ENCODE measurements at regions of chr3 and their contacts with region 1.

Region 1: GRCh38 chr3:184371570-184372018 is 6.4 kb downstream of the THPO start:
- DNase-seq: peak; percentile 79
- ATAC-seq: peak; percentile 97
- H3K4me3 Mint-ChIP-seq: no peak overlapping the region
- H3K27ac Mint-ChIP-seq: peak overlapping the region; percentile 51
- H3K4me1 Mint-ChIP-seq: peaks cover 11% of the 10 kb centered on the region
- H3K27me3 Mint-ChIP-seq: peaks cover 7% of the 10 kb centered on the region

Region 2: GRCh38 chr3:184135149-184135910 is 236.3 kb before region 1 on chr3 and contains the start of gene EIF2B5:
- CTCF ChIA-PET with region 1: no interaction called
- POLR2A ChIA-PET with region 1: no interaction called
- DNase-seq: peak; percentile 90
- ATAC-seq: peak; percentile 92
- H3K4me3 Mint-ChIP-seq: peak within 1 kb of the TSS; percentile 87
- H3K27ac Mint-ChIP-seq: peak within 1 kb of the TSS; percentile 88
- H3K4me1 Mint-ChIP-seq: peaks cover 30% of the 10 kb centered on the region
- H3K27me3 Mint-ChIP-seq: no peaks in the 10 kb centered on the region
- total RNA-seq, gene EIF2B5: 55.1 to 55.4 TPM

Region 3: GRCh38 chr3:184354121-184354728 is 17.4 kb before region 1 on chr3:
- CTCF ChIA-PET with region 1: interaction called, 22 read pairs
- POLR2A ChIA-PET with region 1: no interaction called
- DNase-seq: peak; percentile 63
- ATAC-seq: peak; percentile 73
- H3K4me3 Mint-ChIP-seq: no peak overlapping the region
- H3K27ac Mint-ChIP-seq: peak overlapping the region; percentile 63
- H3K4me1 Mint-ChIP-seq: peaks cover 6% of the 10 kb centered on the region
- H3K27me3 Mint-ChIP-seq: no peaks in the 10 kb centered on the region

Region 4: DNA sequence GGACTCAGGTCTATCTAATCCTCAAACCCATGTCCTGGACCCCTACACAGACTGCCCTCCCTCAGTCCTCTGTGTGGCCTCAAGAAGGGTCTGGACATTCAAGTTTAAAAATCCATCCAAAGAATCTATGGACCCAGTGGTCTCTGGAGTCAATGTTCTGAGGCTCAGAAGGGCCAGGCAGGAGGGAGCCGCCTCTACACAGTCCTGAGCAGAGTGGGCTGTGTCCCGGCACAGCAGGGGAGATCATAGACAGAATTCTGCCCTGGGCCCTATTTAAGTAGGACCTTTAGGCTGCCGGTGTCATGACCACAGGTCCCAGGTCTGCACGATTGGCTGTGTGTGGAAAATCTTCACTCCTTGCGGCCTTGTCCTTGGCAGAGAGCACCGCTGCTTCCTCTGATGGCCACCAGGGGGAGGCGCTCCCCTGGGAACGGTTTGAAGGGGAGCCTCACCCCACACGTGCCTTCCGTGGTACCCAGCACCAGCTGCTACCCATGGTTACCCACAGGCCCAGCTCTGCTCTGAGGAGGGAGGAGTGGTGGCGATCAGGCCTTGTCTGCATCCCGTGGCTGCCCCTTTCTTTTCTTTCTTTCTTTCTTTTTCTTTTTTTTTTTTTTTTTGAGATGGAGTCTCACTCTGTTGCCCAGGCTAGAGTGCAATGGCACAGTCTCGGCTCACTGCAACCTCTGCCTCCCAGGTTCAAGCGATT is 46.2 kb after region 1 on chr3:
- CTCF ChIA-PET with region 1: interaction called, 10 read pairs
- POLR2A ChIA-PET with region 1: no interaction called
- DNase-seq: peak; percentile 75
- ATAC-seq: peak; percentile 97
- H3K4me3 Mint-ChIP-seq: no peak overlapping the region
- H3K27ac Mint-ChIP-seq: no peak overlapping the region
- H3K4me1 Mint-ChIP-seq: no peaks in the 10 kb centered on the region
- H3K27me3 Mint-ChIP-seq: peaks cover 1% of the 10 kb centered on the region

Region 5: DNA sequence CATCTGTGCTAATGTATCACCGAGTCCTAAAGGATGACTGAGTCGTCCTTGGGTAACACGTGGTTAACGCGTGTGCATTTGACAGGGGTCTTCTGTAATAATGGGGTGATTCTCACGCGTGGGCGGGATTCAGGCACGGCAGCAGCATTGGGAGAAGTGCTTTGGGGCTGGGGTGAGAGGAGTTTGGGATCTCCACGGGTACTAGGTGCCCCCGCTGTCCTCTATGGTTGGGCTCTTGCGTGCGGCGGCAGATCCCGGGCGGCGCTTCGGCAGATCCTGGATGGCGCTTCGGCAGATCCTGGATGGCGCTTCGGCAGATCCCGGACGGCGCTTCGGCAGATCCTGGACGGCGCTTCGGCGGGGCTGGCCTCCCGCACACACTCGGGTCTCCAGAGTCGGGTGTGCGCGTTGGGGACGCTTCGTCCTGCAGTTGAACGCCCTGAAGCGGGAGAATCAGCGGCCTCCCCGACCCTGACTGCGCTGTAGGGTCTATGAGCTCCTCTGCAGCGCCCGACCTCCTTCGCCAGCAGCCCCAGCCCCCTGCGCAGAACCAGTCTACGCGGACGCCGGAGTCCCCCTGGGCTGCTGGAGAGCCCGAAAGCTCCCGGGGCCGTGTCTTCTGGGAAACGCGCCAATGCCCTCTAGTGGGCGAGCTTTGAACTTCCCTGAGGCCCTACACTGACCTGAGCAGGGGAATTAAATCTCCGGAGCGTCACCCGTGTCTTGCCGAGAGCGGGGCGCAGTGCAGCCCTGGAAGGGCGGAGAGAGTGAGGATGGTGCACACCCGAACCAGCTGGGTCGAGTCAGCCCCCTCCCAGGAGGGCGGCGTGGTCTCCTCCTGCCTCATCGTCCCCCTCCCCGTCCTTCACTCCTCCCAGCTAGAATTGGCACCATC is 141.9 kb after region 1 on chr3:
- CTCF ChIA-PET with region 1: interaction called, 69 read pairs
- POLR2A ChIA-PET with region 1: no interaction called
- DNase-seq: peak; percentile 87
- ATAC-seq: peak; percentile 99
- H3K4me3 Mint-ChIP-seq: peak overlapping the region; percentile 26
- H3K27ac Mint-ChIP-seq: no peak overlapping the region
- H3K4me1 Mint-ChIP-seq: peaks cover 10% of the 10 kb centered on the region
- H3K27me3 Mint-ChIP-seq: peaks cover 52% of the 10 kb centered on the region

Region 6: DNA sequence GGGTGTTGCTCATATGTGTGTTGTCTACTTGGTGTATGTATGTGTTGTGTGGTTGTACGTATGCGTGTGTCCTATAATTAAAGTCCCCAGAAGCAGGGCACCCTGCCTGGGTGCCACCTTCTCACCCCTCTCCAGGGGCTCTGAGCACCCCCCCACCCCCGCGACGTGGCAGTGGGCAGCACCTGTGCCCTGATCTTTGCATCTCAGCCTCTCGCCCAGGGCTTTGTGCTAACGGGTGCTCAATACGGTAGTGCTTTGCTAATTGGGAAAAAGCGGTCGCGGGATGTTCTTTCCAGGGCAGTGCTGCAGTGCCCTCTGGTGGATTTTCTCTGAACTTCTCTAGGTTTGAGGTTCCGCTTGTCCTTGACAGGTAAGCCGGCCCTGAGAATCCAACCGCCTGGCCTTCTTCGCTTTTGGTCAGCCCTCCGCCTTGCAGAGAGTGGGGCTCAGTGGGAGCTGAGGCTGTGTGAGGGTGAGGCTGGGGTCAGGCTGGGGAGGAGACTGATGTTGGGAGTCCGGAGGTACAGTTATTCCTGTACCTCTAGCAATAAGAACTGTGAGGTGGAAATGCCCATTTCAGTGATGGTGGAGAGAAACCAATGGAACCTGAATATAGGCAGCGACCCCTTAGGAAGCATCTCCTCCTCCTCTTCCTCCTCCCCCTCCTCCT is 172.4 kb after region 1 on chr3:
- CTCF ChIA-PET with region 1: interaction called, 97 read pairs
- POLR2A ChIA-PET with region 1: no interaction called
- DNase-seq: peak; percentile 85
- ATAC-seq: peak; percentile 80
- H3K4me3 Mint-ChIP-seq: no peak overlapping the region
- H3K27ac Mint-ChIP-seq: no peak overlapping the region
- H3K4me1 Mint-ChIP-seq: peaks cover 5% of the 10 kb centered on the region
- H3K27me3 Mint-ChIP-seq: peaks cover 24% of the 10 kb centered on the region